HEK293 (cell line): ENCODE measurements at regions of chr17 and their contacts with region 1.

Region 1: DNA sequence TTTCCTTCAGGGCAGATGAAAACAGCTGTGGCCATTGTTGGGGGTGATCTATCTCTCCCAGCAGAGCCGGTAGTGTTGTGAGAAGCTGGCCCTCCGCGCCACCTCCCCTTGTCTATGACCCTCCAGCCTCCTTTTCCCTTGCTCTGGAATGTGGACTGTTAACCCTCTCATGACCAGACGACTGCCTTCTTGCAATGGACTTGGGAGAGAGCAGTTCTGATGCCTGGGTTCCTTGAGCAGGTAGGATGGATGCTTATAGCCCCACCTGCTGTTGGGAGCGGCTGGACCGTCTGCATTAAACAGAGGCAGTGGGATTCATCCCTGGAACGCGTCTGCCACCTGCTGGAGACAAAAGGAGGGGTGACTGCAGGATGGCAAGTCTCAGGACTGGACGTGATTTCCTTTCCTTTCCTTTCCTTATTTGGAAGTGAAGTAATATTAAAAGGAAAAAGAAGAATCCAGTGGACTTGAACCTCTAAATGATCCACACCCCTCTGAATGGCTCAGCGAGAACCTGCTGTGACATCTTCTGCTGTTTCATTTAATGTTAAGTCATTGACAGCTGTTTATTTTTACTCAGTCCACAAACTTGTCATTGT is 1.8 kb upstream of the SOST start:
- H3K4me3 ChIP-seq: no peak overlapping the region
- H3K27ac ChIP-seq: no peak overlapping the region
- H3K4me1 ChIP-seq: peaks cover 2% of the 10 kb centered on the region; the same call in 1 of the 2 replicates
- CTCF ChIP-seq: peak; percentile 100

Region 2: GRCh38 chr17:43562679-43563599 is 197.4 kb before region 1 on chr17:
- CTCF ChIA-PET with region 1: interaction called, 11 read pairs
- POLR2A ChIA-PET with region 1: no interaction called
- H3K4me3 ChIP-seq: no peak overlapping the region
- H3K27ac ChIP-seq: no peak overlapping the region
- H3K4me1 ChIP-seq: peaks cover 12% of the 10 kb centered on the region
- CTCF ChIP-seq: no peak

Region 3: GRCh38 chr17:43713494-43714162 is 46.7 kb before region 1 on chr17:
- CTCF ChIA-PET with region 1: interaction called, 35 read pairs
- POLR2A ChIA-PET with region 1: interaction called, 4 read pairs
- H3K4me3 ChIP-seq: peak overlapping the region; percentile 38
- H3K27ac ChIP-seq: no peak overlapping the region
- H3K4me1 ChIP-seq: peaks cover 5% of the 10 kb centered on the region
- CTCF ChIP-seq: 0 out of 2 replicates have a peak, but pooled peaks have one; percentile 19

Region 4: GRCh38 chr17:43740541-43740940 is 19.8 kb before region 1 on chr17:
- CTCF ChIA-PET with region 1: interaction called, 23 read pairs
- POLR2A ChIA-PET with region 1: no interaction called
- H3K4me3 ChIP-seq: no peak overlapping the region
- H3K27ac ChIP-seq: no peak overlapping the region
- H3K4me1 ChIP-seq: no peaks in the 10 kb centered on the region
- CTCF ChIP-seq: no peak

Region 5: DNA sequence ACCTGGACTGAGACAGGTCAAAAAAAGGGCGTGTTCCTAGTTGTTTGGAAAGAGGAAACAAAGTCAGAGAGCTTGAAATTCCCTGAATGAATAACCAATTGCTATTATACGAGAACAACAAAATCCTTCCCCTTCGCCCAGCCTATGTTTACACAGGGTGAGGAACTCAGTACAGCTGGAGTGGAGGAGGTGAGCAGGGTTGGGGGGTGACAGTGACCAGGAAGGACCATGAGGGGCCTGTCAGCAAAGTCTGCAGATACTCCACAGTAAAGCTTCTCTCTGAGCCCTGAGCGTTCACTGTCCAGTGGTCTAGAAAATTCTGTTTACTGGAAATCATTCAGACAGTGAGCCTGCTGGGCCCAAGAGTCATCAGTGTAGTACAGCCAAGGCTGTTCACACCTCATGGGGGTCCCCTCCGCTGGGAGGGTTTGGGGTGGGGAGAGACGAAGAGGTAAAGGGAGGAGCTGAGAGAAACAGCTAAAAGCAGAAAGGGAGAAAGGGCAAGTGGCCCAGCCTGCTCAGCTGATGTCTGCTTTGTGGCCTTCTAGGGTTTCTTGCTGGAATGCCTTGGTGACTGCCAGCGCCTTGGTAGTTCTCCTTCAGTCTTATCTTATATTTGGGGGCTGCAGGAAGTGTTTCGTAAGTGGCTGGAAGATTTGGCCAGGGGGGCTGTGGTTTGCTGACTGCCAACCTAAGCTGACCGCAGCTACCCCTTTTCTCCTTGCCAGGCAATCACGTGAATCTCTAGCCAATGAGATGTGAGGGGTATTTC is 12.7 kb after region 1 on chr17:
- CTCF ChIA-PET with region 1: interaction called, 51 read pairs
- POLR2A ChIA-PET with region 1: interaction called, 3 read pairs
- H3K4me3 ChIP-seq: no peak overlapping the region
- H3K27ac ChIP-seq: no peak overlapping the region
- H3K4me1 ChIP-seq: no peaks in the 10 kb centered on the region
- CTCF ChIP-seq: no peak